ENCODE measurements at regions of chr3 and their contacts with region 1.

Region 1: GRCh38 chr3:150479371-150479770 is 66.9 kb downstream of the SERP1 start:
- DNase-seq: no peak
- H3K4me3 ChIP-seq: no peak overlapping the region
- H3K27ac ChIP-seq: no peak overlapping the region
- H3K4me1 ChIP-seq: no peaks in the 10 kb centered on the region
- H3K27me3 ChIP-seq: no peaks in the 10 kb centered on the region
- CTCF ChIP-seq: no peak

Region 2: GRCh38 chr3:149954812-149955211 is 524.6 kb before region 1 on chr3:
- intact Hi-C with region 1: loop called (anchors 5 kb)
- DNase-seq: no peak
- H3K4me3 ChIP-seq: no peak overlapping the region
- H3K27ac ChIP-seq: no peak overlapping the region
- H3K4me1 ChIP-seq: peaks cover 0 to 47% (median 8%) of the 10 kb centered on the region in 4 donors
- H3K27me3 ChIP-seq: no peaks in the 10 kb centered on the region
- CTCF ChIP-seq: no peak

Region 3: DNA sequence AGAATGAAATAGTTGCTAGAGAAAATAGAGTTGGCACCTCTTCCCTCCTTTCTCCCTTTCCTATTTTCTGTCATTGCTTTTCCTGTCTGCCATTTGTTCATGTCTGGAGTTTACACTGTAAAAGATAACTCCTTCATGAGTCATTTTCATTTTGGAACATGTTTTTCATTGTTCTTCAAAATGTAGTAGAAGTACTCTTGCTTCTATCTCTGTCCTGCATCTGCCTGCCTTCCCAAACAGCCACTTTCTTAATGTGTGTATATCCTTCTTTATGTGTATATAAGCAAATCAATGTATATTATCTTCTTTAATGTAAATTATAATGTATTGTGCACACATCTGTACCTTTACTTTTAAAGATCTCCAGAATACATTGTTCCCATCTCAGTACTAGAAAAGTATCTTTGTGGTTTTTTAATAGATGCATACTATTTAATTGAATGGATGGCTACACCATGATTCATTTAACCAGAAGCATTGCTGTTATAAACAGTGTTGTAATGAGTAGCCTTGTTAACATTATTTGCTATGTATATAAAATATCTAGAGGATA is 30.1 kb before region 1 on chr3:
- intact Hi-C with region 1: no loop called
- DNase-seq: no peak
- H3K4me3 ChIP-seq: no peak overlapping the region
- H3K27ac ChIP-seq: no peak overlapping the region
- H3K4me1 ChIP-seq: peaks cover 0 to 64% (median 7%) of the 10 kb centered on the region in 4 donors
- H3K27me3 ChIP-seq: no peaks in the 10 kb centered on the region
- CTCF ChIP-seq: no peak

Region 4: DNA sequence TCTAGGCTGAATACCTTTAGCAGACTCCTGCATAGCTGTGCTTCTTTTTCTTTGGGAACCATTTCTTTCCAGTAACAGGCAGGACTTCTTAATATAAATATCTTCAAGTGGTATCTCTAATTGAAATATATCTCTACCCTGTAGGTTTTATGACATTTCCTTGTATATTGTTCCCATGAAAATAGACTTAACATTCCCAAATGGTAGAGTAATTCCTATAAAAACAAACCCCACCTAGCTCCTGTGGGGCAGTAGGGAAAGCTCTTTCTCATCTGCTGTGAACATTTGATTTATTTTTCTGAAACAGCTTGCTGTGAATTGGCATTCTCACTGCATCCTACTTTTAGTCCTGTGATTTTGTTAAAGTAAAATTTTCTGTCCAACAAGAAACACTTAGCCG is 144.6 kb after region 1 on chr3:
- intact Hi-C with region 1: no loop called
- DNase-seq: no peak
- H3K4me3 ChIP-seq: no peak overlapping the region
- H3K27ac ChIP-seq: no peak overlapping the region
- H3K4me1 ChIP-seq: peaks cover 0 to 35% (median 8%) of the 10 kb centered on the region in 4 donors
- H3K27me3 ChIP-seq: no peaks in the 10 kb centered on the region
- CTCF ChIP-seq: no peak

Measured in tibial artery (tissue), 4 donors.